Common myeloid progenitor, CD34-positive (primary cell): ENCODE measurements at regions of chr9 and their contacts with region 1.

Region 1: GRCh38 chr9:78035383-78035993 is 3.9 kb upstream of the GNAQ start:
- DNase-seq: peak; percentile 88 to 94 (median 89)
- H3K4me3 ChIP-seq: peak overlapping the region in 2 of 7 experiments; percentile 63 to 64
- H3K27ac ChIP-seq: no peak overlapping the region
- H3K4me1 ChIP-seq: peaks cover 7 to 38% (median 22%) of the 10 kb centered on the region in 4 experiments
- H3K27me3 ChIP-seq: no peaks in the 10 kb centered on the region

Region 2: DNA sequence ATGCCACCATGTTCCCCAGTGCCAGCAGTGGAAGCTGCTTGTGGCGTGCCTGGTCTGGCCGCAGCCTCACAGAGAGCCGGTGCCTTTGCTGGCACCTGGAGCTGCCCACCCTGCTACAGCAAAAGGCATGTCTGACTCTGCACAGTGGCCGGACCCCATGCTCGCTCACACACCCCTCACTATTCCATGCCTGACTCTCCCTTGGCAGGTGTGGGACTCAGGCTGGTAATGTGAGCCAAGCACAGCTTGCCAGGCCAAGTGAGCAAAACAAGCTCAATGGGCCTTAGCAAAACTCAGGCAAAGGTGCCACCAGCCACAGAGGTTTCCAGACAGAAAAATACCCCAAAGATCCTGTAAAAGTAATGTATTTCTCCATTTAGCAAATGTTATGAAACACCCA is 402.8 kb before region 1 on chr9:
- CTCF ChIA-PET with region 1: no interaction called
- POLR2A ChIA-PET with region 1: no interaction called
- DNase-seq: no peak
- H3K4me3 ChIP-seq: no peak overlapping the region
- H3K27ac ChIP-seq: no peak overlapping the region
- H3K4me1 ChIP-seq: no peaks in the 10 kb centered on the region
- H3K27me3 ChIP-seq: no peaks in the 10 kb centered on the region

Region 3: GRCh38 chr9:77864211-77864889 is 171.1 kb before region 1 on chr9:
- CTCF ChIA-PET with region 1: interaction called, 63 read pairs
- POLR2A ChIA-PET with region 1: no interaction called
- DNase-seq: peak; percentile 86 to 96 (median 93)
- H3K4me3 ChIP-seq: no peak overlapping the region
- H3K27ac ChIP-seq: peak overlapping the region in 1 of 2 experiments; percentile 23
- H3K4me1 ChIP-seq: peaks cover 14 to 22% (median 19%) of the 10 kb centered on the region in 4 experiments
- H3K27me3 ChIP-seq: no peaks in the 10 kb centered on the region

Region 4: DNA sequence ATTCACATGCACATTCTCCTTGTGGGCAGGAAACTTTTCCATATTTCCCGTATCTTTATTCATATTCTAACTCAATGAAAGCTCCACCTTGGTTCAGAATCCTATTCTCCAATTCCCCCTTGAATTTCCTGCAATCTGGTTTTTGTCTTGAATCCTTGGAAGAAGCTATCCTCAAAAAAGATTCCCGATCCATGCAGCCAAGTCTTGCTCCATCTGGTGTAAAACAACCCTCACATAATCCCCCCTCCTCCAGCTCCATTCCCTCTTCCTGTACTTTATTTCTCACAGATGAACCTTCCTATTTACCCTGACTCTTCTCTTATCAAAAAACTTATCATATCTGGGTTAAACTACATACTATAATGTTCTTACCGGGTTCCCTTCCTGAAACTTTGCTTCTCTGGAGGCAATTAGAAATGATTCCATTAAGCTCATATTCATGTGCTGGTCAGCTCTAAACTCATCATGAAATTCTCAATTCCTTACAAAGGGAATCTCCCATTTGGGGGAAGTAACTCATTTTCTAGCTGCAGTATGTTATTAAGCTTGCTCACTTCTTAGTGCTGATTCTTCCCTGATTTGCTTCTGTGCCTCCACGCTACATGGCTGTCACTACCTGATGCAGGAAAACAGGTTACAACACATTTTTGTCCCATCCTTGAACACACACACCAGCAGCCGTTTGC is 85.6 kb before region 1 on chr9:
- CTCF ChIA-PET with region 1: interaction called, 14 read pairs
- POLR2A ChIA-PET with region 1: interaction called, 3 read pairs
- DNase-seq: no peak
- H3K4me3 ChIP-seq: no peak overlapping the region
- H3K27ac ChIP-seq: no peak overlapping the region
- H3K4me1 ChIP-seq: peaks cover 35 to 79% (median 65%) of the 10 kb centered on the region in 4 experiments
- H3K27me3 ChIP-seq: no peaks in the 10 kb centered on the region

Region 5: DNA sequence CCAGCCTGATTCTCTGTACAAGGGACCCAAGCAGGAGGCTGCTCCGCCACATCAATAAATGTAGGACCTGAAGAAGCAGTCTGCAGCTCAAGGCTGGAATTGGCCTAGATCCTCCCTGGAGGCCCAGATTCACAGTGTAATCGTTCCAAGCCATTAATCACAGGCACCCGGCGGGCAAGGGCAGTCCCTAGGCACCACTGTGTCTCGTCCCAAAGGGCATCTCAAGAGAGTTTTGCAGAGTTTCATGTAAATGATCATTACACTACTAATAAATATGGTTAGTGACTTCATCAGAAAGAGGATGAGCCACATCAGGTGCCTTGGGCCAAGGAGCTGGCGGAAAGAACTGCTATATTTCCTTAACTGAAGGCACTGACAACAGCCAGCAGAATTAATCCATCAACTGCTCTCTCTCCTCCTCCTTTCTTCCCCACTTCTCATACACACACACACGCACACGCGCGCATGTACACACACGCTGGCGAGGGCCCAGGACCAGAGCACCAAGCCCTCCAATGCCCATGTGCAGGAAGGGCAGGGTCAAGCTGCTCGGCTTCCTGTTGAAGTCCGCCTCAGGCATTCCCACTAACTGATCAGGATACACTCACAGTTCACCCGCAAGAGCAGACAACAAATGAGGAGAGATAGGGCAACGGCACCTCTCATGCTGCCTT is 37.7 kb before region 1 on chr9:
- CTCF ChIA-PET with region 1: interaction called, 12 read pairs
- POLR2A ChIA-PET with region 1: no interaction called
- DNase-seq: peak; percentile 27 to 68 (median 48)
- H3K4me3 ChIP-seq: peak overlapping the region in 4 of 7 experiments; percentile 6 to 67 (median 55)
- H3K27ac ChIP-seq: peak overlapping the region; percentile 19 to 66
- H3K4me1 ChIP-seq: peaks cover 12 to 66% (median 36%) of the 10 kb centered on the region in 4 experiments
- H3K27me3 ChIP-seq: no peaks in the 10 kb centered on the region

Region 6: DNA sequence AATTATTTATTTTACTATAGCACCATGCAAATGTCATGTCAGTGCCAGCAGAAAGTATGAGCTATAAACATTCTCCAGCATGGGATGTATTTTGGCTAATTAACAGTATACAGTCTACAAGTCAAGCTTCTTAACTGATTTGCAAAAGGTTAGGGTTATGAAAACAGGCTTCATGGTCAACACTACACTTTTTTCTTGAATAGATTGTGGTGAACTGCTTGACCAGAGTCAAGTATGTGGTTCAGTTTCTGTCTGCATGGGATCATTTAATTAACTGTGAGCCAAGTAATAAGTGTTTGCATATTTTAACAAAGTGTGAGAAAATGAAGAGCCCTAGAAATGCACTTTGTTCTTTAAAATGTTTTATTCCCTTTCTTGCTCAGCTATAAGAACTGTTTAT is 10.6 kb after region 1 on chr9:
- CTCF ChIA-PET with region 1: interaction called, 12 read pairs
- POLR2A ChIA-PET with region 1: interaction called, 3 read pairs
- DNase-seq: no peak
- H3K4me3 ChIP-seq: no peak overlapping the region
- H3K27ac ChIP-seq: no peak overlapping the region
- H3K4me1 ChIP-seq: no peaks in the 10 kb centered on the region
- H3K27me3 ChIP-seq: no peaks in the 10 kb centered on the region

Region 7: GRCh38 chr9:78062710-78063109 is 27.2 kb after region 1 on chr9:
- CTCF ChIA-PET with region 1: no interaction called
- POLR2A ChIA-PET with region 1: no interaction called
- DNase-seq: no peak
- H3K4me3 ChIP-seq: no peak overlapping the region
- H3K27ac ChIP-seq: no peak overlapping the region
- H3K4me1 ChIP-seq: no peaks in the 10 kb centered on the region
- H3K27me3 ChIP-seq: no peaks in the 10 kb centered on the region

Region 8: GRCh38 chr9:78115073-78115472 is 79.6 kb after region 1 on chr9:
- CTCF ChIA-PET with region 1: interaction called, 11 read pairs
- POLR2A ChIA-PET with region 1: no interaction called
- DNase-seq: peak in 2 of 3 donors; percentile 30 to 45
- H3K4me3 ChIP-seq: no peak overlapping the region
- H3K27ac ChIP-seq: no peak overlapping the region
- H3K4me1 ChIP-seq: peaks cover 0 to 20% (median 2%) of the 10 kb centered on the region in 4 experiments
- H3K27me3 ChIP-seq: no peaks in the 10 kb centered on the region

Region 9: DNA sequence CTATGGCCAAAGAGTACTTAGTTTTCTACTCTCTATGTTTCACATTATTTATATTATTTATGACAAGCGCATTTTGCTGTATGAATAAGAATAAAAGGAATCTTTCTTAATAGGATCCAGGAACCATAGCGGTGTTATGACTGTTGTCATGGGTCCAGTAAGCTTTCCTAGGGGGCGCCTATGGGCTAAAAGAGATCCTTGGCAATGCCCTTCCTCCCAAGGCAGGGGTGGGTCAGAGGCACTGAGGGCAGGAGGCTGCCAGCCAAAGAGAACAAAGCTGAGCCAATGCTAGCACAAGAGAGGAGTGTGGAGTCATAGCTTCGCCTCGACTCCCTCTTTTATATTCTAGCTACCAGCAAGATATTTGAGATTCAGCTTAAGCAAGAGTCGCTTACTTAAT is 94.5 kb after region 1 on chr9:
- CTCF ChIA-PET with region 1: no interaction called
- POLR2A ChIA-PET with region 1: no interaction called
- DNase-seq: no peak
- H3K4me3 ChIP-seq: no peak overlapping the region
- H3K27ac ChIP-seq: no peak overlapping the region
- H3K4me1 ChIP-seq: peaks cover 0 to 7% (median 4%) of the 10 kb centered on the region in 4 experiments
- H3K27me3 ChIP-seq: no peaks in the 10 kb centered on the region